AG04449 (cell line): ENCODE measurements at regions of chr3 and their contacts with region 1.

Region 1: GRCh38 chr3:124467980-124468902 is 262.0 kb upstream of the UMPS start:
- DNase-seq: no peak
- H3K4me3 ChIP-seq: no peak overlapping the region
- CTCF ChIP-seq: peak; percentile 99

Region 2: DNA sequence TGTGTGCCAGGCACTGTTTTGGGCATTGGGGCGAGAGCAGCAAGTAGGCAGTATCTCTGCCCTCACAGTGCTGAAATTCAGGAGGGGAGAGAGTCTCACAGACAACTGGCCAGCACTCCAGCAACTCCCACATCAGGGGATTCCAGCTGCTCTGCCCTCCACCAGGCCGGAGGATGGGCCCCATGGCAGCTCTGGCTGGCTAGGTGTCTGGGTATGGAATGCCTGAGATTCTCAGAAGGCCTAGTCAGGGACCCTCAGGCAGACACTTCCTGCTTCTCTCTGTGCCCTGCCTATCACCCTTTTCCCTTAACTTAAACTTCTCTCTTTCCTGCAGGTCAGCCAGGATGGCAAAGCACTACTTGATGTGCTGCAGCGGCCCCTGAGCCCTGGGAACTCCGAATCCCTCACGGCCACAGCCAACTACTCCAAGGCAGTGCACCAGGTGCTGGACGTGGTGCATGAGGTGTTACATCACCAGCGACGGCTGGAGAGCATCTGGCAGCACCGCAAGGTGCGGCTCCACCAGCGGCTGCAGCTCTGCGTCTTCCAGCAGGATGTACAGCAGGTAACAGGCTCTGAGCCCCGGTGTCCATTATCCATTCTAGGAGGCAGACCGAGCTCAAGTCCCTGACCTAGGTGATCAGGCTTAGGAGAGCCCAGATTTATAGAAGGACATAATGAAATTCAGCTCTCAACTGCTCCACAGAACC is 134.2 kb before region 1 on chr3:
- CTCF ChIA-PET with region 1: interaction called, 11 read pairs
- POLR2A ChIA-PET with region 1: no interaction called
- DNase-seq: no peak
- H3K4me3 ChIP-seq: no peak overlapping the region
- CTCF ChIP-seq: no peak

Region 3: DNA sequence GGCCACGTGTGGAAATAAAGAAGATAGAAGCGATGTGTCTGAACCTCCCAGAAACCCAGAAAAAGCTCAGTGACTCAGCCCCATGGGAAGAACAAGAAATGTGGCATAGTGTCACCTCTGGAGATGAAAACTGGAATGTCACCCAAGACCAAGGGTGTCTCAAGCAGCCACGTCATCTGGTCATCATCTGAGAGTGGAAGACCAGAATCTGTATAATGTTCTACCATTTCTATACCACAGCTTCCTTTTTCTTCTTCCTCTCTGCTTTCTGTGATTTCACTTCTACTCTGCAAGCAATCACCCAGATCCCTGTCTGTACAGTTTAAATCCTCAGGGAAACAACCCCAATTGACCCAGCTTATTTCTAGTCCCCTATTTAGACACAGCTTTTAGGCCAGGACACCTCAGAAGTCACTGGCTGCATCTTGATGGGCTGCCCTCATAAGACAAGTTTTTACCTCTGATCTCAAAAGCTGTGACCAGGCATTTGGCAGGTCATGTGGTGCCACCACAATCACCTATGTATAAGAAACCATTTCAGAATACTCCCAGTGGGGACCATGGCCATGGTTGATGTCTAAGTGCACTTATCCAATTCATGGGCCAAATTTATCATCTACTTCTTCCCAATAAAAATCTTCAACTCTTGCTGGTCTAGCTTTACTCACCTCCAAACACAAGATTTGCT is 16.5 kb before region 1 on chr3:
- CTCF ChIA-PET with region 1: interaction called, 76 read pairs
- POLR2A ChIA-PET with region 1: no interaction called
- DNase-seq: no peak
- H3K4me3 ChIP-seq: no peak overlapping the region
- CTCF ChIP-seq: no peak

Region 4: DNA sequence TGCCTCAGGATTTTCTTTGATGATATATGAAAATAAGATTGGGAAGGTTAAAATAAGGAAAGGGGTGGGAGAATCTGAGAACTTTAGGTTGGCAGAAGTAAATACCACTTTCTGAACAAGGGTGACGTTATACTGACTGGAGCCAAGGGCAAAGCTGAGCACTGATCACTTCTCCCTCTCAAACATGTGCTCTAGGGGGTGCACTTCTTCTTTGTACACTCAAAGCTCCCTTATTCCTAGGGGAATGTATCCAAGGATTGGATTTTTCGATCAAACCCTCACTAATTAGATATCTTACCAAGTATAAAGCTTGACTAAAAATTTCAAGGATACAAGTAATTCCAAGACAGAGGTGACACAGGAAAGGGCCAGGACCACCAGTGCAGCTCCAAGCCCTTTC is 18.1 kb after region 1 on chr3:
- CTCF ChIA-PET with region 1: interaction called, 28 read pairs
- POLR2A ChIA-PET with region 1: no interaction called
- DNase-seq: no peak
- H3K4me3 ChIP-seq: no peak overlapping the region
- CTCF ChIP-seq: no peak

Region 5: DNA sequence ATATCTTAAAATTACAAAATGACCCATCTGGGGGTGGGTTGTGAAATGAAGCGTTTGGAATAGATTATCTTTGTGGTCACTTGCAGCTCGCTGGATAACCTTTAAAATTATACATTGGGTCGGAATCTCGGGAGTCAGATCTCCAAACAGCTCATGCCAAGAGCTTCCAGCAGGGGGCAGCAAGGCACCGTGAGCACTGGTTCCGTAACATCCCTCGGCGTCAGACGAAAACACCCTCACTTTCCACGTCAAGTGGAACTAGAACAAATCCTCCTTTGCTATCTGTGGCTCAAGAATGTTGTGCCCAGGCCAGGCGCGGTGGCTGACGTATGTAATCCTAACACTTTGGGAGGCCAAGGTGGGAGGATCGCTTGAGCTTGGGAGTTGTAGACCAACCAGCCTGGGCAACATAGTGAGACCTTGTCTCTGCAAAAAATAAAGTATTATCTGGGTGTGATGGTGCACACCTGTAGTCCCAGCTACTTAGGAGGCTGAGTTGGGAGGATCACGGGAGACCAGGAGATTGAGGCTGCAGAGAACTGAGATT is 293.1 kb after region 1 on chr3:
- CTCF ChIA-PET with region 1: no interaction called
- POLR2A ChIA-PET with region 1: no interaction called
- DNase-seq: peak; percentile 57
- H3K4me3 ChIP-seq: no peak overlapping the region
- CTCF ChIP-seq: peak; percentile 89

Region 6: GRCh38 chr3:124860599-124860998 is 392.4 kb after region 1 on chr3:
- CTCF ChIA-PET with region 1: no interaction called
- POLR2A ChIA-PET with region 1: no interaction called
- DNase-seq: peak; percentile 90
- H3K4me3 ChIP-seq: no peak overlapping the region
- CTCF ChIP-seq: no peak